ENCODE measurements at regions of chr9 and their contacts with region 1.

Region 1: DNA sequence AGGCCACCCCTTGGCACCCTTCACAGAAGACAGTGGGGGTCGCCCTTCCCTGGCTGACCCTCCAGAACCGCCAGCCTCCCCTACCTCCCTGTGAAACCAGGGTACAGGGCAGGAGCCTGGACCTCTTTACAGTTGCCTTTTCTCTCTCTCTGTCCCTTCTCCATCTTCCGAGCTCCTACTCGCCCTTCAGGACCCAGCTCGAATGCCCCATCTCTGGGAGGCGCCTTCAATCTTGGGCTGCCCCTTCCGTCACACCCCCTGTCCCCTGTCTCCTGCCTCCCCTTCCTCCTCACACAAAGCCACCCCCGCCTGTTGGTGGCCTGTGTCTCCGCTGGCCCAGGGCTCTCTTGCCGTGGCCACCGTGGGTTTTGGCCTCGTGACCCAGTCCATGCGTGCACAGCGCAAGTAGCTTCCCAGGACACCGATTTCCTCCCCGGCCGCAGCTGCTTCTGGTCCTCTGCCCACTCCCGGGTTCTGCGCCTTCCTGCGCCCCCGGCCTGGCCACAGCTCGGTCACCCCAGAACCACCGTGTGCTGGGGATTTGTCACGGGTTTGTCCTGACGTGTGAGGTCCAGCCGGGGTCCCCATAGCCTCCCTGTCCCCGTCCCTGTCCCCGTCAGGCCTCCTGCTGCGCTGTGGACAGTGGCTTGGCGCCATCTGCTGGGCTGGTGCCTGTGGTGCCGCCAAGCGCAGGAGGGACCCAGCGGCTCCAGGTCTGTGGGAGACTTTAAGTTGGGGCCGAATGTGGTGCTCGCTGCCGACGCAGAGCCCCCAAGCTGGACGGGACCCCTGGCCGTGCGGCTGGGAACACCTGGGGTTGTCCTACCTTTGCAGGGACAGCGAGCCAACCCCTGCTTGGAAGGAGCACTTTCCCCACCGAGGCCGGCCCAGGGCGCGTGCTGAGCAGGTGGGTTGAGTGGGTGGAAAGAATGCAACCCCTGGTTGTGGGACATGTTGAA is 4.0 kb upstream of the TMEM250 start:
- DNase-seq: peak; percentile 67 to 85 (median 81)
- H3K4me3 ChIP-seq: no peak overlapping the region
- H3K27ac ChIP-seq: no peak overlapping the region
- H3K4me1 ChIP-seq: peaks cover 4% of the 10 kb centered on the region
- H3K27me3 ChIP-seq: no peaks in the 10 kb centered on the region
- CTCF ChIP-seq: peak; percentile 97 to 99 (median 99)
- EP300 ChIP-seq: no peak
- POLR2A ChIP-seq: peak; percentile 28

Region 2: GRCh38 chr9:135602789-135603481 is 519.8 kb before region 1 on chr9:
- intact Hi-C with region 1: loop called in 3 of 4 experiments (anchors 5 kb)
- DNase-seq: peak in 1 of 5 donors; percentile 24
- H3K4me3 ChIP-seq: no peak overlapping the region
- H3K27ac ChIP-seq: no peak overlapping the region
- H3K4me1 ChIP-seq: peaks cover 4% of the 10 kb centered on the region
- H3K27me3 ChIP-seq: no peaks in the 10 kb centered on the region
- CTCF ChIP-seq: peak in 2 of 3 donors; percentile 50 to 55
- EP300 ChIP-seq: no peak
- POLR2A ChIP-seq: no peak

Region 3: GRCh38 chr9:135701959-135702721 is 420.6 kb before region 1 on chr9 and contains the start of gene KCNT1:
- intact Hi-C with region 1: loop called in 2 of 4 experiments (anchors 5 to 10 kb)
- DNase-seq: peak; percentile 63 to 88 (median 75)
- H3K4me3 ChIP-seq: peak within 1 kb of the TSS; percentile 25
- H3K27ac ChIP-seq: peak within 1 kb of the TSS; percentile 9 to 47
- H3K4me1 ChIP-seq: peaks cover 14% of the 10 kb centered on the region
- H3K27me3 ChIP-seq: no peaks in the 10 kb centered on the region
- CTCF ChIP-seq: peak; percentile 80 to 98 (median 82)
- EP300 ChIP-seq: no peak
- POLR2A ChIP-seq: no peak
- total RNA-seq, gene KCNT1: 0.83 to 12.0 (median 6.4) TPM

Region 4: GRCh38 chr9:135864447-135865049 is 258.2 kb before region 1 on chr9:
- intact Hi-C with region 1: loop called in 2 of 4 experiments (anchors 5 to 10 kb)
- DNase-seq: peak; percentile 42 to 75 (median 71)
- H3K4me3 ChIP-seq: no peak overlapping the region
- H3K27ac ChIP-seq: no peak overlapping the region
- H3K4me1 ChIP-seq: peaks cover 2% of the 10 kb centered on the region
- H3K27me3 ChIP-seq: no peaks in the 10 kb centered on the region
- CTCF ChIP-seq: peak in 2 of 3 donors; percentile 37 to 56
- EP300 ChIP-seq: no peak
- POLR2A ChIP-seq: no peak

Region 5: GRCh38 chr9:135971892-135972291 is 150.8 kb before region 1 on chr9:
- intact Hi-C with region 1: loop called (anchors 1 to 5 kb)
- DNase-seq: no peak
- H3K4me3 ChIP-seq: no peak overlapping the region
- H3K27ac ChIP-seq: no peak overlapping the region
- H3K4me1 ChIP-seq: no peaks in the 10 kb centered on the region
- H3K27me3 ChIP-seq: no peaks in the 10 kb centered on the region
- CTCF ChIP-seq: no peak
- EP300 ChIP-seq: no peak
- POLR2A ChIP-seq: no peak

Region 6: GRCh38 chr9:136089697-136090045 is 33.0 kb before region 1 on chr9:
- intact Hi-C with region 1: loop called in 1 of 4 experiments (anchors 5 kb)
- DNase-seq: no peak
- H3K4me3 ChIP-seq: no peak overlapping the region
- H3K27ac ChIP-seq: no peak overlapping the region
- H3K4me1 ChIP-seq: peaks cover 7% of the 10 kb centered on the region
- H3K27me3 ChIP-seq: no peaks in the 10 kb centered on the region
- CTCF ChIP-seq: no peak
- EP300 ChIP-seq: no peak
- POLR2A ChIP-seq: no peak

Region 7: DNA sequence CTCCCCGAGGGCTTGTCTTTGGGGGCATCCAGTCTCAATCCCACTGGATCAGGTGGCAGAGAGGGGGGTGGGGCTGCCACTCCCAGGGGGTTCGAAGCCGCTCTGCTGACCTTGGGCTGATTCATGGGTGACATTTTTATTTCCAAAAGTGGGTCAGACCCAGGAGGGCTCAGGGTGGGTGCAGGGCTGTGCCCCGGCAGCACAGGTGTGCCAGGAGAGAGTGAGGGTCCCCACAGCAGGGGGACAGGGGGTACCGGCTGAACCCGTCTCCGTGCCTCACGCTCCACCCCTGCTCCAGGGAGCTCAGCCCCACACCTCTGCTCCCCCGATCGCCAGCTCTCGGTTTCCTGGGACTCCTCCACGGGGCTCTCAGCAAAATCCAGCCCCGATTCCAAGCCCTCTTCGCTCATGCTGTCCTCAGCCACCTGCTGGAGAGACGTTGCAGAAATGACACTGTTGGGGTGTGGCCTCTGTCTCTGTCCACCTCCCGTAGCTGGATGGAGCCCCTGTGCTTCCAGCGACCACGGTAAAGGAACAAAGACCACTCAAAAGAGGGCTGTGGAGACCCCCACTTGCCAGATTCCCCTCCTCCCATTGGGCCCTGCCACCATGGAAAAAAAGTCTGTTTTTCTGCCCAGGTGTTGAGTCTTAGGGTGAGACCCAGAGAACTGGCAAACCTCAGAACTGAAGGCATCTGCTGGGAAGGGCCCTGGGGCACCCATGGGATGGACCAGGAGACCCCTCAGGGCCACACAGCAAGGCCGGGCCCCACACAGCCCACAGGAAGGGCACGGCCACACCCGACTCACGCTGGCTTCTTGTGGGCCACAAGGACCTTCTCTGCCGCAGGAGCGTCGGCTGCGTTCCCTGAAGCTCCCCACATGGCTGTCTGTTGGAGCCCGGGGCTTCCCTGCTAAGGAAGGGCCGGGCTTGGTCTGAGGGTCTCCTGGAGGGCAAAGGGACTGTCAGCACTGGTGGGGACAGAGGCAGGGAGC is 133.5 kb after region 1 on chr9:
- intact Hi-C with region 1: no loop called
- DNase-seq: no peak
- H3K4me3 ChIP-seq: no peak overlapping the region
- H3K27ac ChIP-seq: peak overlapping the region in 1 of 2 donors; percentile 57
- H3K4me1 ChIP-seq: peaks cover 21% of the 10 kb centered on the region
- H3K27me3 ChIP-seq: no peaks in the 10 kb centered on the region
- CTCF ChIP-seq: no peak
- EP300 ChIP-seq: no peak
- POLR2A ChIP-seq: no peak

Measured in ovary (tissue), 10 donors.